ENCODE measurements at regions of chr5 and their contacts with region 1.

Region 1: GRCh38 chr5:102583276-102584124 is 84.7 kb upstream of the SLCO6A1 start:
- DNase-seq: no peak
- ATAC-seq: no peak
- H3K4me3 ChIP-seq: no peak overlapping the region
- H3K27ac ChIP-seq: no peak overlapping the region
- H3K4me1 ChIP-seq: no peaks in the 10 kb centered on the region
- H3K27me3 ChIP-seq: no peaks in the 10 kb centered on the region

Region 2: GRCh38 chr5:102666164-102666946 is 82.9 kb after region 1 on chr5:
- intact Hi-C with region 1: loop called (anchors 2 to 5 kb)
- DNase-seq: no peak
- ATAC-seq: no peak
- H3K4me3 ChIP-seq: no peak overlapping the region
- H3K27ac ChIP-seq: no peak overlapping the region
- H3K4me1 ChIP-seq: peaks cover 0 to 5% of the 10 kb centered on the region in 2 donors
- H3K27me3 ChIP-seq: no peaks in the 10 kb centered on the region

Region 3: GRCh38 chr5:102754767-102755431 is 171.4 kb after region 1 on chr5 and contains the start of gene PAM:
- intact Hi-C with region 1: loop called in 1 of 2 experiments (anchors 10 kb)
- DNase-seq: peak; percentile 89 to 93
- ATAC-seq: peak; percentile 94
- H3K4me3 ChIP-seq: peak within 1 kb of the TSS; percentile 79 to 92
- H3K27ac ChIP-seq: peak within 1 kb of the TSS; percentile 81 to 93
- H3K4me1 ChIP-seq: peaks cover 0 to 3% of the 10 kb centered on the region in 2 donors
- H3K27me3 ChIP-seq: no peaks in the 10 kb centered on the region
- total RNA-seq, gene PAM: 711 to 787 TPM

Region 4: GRCh38 chr5:103041071-103041676 is 457.7 kb after region 1 on chr5:
- intact Hi-C with region 1: loop called (anchors 2 kb)
- DNase-seq: no peak
- ATAC-seq: peak; percentile 65
- H3K4me3 ChIP-seq: no peak overlapping the region
- H3K27ac ChIP-seq: no peak overlapping the region
- H3K4me1 ChIP-seq: no peaks in the 10 kb centered on the region
- H3K27me3 ChIP-seq: no peaks in the 10 kb centered on the region

Region 5: GRCh38 chr5:103132684-103133083 is 549.2 kb after region 1 on chr5:
- intact Hi-C with region 1: loop called in 1 of 2 experiments (anchors 5 kb)
- DNase-seq: no peak
- ATAC-seq: no peak
- H3K4me3 ChIP-seq: no peak overlapping the region
- H3K27ac ChIP-seq: peak overlapping the region in 1 of 2 donors; percentile 67
- H3K4me1 ChIP-seq: peaks cover 0 to 2% of the 10 kb centered on the region in 2 donors
- H3K27me3 ChIP-seq: no peaks in the 10 kb centered on the region